ENCODE measurements at regions of chr4 and their contacts with region 1.

Region 1: GRCh38 chr4:15132739-15133138 is 130.5 kb downstream of the CPEB2 start:
- DNase-seq: no peak
- H3K4me3 ChIP-seq: no peak overlapping the region
- H3K27ac ChIP-seq: no peak overlapping the region
- H3K4me1 ChIP-seq: no peaks in the 10 kb centered on the region
- H3K27me3 ChIP-seq: no peaks in the 10 kb centered on the region
- CTCF ChIP-seq: no peak
- EP300 ChIP-seq: no peak
- POLR2A ChIP-seq: no peak

Region 2: GRCh38 chr4:15149839-15150476 is 17.2 kb after region 1 on chr4:
- intact Hi-C with region 1: loop called in 1 of 4 experiments (anchors 1 kb)
- DNase-seq: peak; percentile 71 to 81 (median 75)
- H3K4me3 ChIP-seq: no peak overlapping the region
- H3K27ac ChIP-seq: peak overlapping the region in 1 of 2 donors; percentile 51
- H3K4me1 ChIP-seq: peaks cover 20% of the 10 kb centered on the region
- H3K27me3 ChIP-seq: no peaks in the 10 kb centered on the region
- CTCF ChIP-seq: no peak
- EP300 ChIP-seq: no peak
- POLR2A ChIP-seq: no peak

Region 3: GRCh38 chr4:15906024-15906443 is 773.3 kb after region 1 on chr4:
- intact Hi-C with region 1: no loop called
- DNase-seq: peak in 1 of 5 donors; percentile 22
- H3K4me3 ChIP-seq: no peak overlapping the region
- H3K27ac ChIP-seq: no peak overlapping the region
- H3K4me1 ChIP-seq: no peaks in the 10 kb centered on the region
- H3K27me3 ChIP-seq: no peaks in the 10 kb centered on the region
- CTCF ChIP-seq: no peak
- EP300 ChIP-seq: no peak
- POLR2A ChIP-seq: no peak